MCF 10A (cell line): ENCODE measurements at regions of chr10 and their contacts with region 1.

Region 1: DNA sequence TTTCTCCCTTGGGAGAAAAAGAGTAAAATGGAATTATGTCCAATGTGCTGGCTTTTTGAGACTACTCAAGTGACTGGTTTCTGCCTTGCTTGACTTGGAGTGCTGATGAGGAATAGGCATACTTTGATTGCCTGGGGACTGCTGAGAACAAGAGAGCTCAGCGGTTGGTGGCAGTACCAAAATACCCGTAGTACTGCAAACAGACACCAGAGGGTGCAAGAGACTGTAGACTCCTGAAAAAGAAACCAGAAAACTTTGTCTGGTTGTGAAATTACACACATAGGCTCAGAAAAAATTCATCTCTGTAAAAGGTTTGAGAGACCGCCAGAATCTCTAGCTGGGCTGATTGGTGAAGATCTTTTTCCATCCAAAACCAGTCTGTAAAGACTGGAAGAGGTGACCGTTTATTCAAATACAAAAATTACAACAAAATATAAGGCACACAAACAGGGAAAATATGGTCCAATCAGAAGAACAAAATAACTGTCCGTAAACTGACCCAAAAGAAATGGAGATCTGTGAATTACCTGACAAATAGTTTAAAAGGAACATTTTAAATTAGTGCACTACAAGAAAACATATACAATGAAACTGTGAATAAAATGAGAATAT is 18.5 kb downstream of the BICC1 start:
- DNase-seq: peak; percentile 81
- H3K4me3 Mint-ChIP-seq: no peak overlapping the region
- H3K27ac Mint-ChIP-seq: peak overlapping the region; percentile 87
- H3K4me1 Mint-ChIP-seq: peaks cover 24% of the 10 kb centered on the region
- H3K27me3 Mint-ChIP-seq: no peaks in the 10 kb centered on the region
- CTCF ChIP-seq: peak; percentile 84

Region 2: GRCh38 chr10:58299580-58299979 is 231.6 kb before region 1 on chr10:
- CTCF ChIA-PET with region 1: interaction called, 17 read pairs
- POLR2A ChIA-PET with region 1: no interaction called
- intact Hi-C with region 1: no loop called
- DNase-seq: peak; percentile 80
- H3K4me3 Mint-ChIP-seq: no peak overlapping the region
- H3K27ac Mint-ChIP-seq: no peak overlapping the region
- H3K4me1 Mint-ChIP-seq: no peaks in the 10 kb centered on the region
- H3K27me3 Mint-ChIP-seq: peaks cover 40% of the 10 kb centered on the region
- CTCF ChIP-seq: peak; percentile 76

Region 3: DNA sequence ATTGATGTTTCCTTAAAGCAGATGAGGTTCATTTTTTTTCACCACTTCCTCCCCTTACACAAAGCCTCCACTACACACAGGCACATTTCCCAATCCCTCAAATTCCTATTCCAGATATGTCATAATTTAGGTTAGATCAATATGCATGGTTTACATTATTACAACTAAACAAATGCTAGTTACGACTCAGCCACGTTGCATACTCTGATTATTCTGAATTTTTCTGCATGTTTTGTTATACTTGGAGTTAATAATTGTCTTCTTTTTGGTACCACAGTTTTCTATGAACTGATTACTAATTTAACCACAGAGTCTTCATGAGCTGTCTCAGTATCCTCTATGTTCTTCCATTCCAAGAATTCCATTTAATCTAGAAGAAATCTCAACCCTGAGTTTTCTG is 22.9 kb before region 1 on chr10:
- CTCF ChIA-PET with region 1: interaction called, 10 read pairs
- POLR2A ChIA-PET with region 1: interaction called, 7 read pairs
- intact Hi-C with region 1: no loop called
- DNase-seq: peak; percentile 18
- H3K4me3 Mint-ChIP-seq: no peak overlapping the region
- H3K27ac Mint-ChIP-seq: no peak overlapping the region
- H3K4me1 Mint-ChIP-seq: peaks cover 6% of the 10 kb centered on the region
- H3K27me3 Mint-ChIP-seq: no peaks in the 10 kb centered on the region
- CTCF ChIP-seq: no peak

Region 4: GRCh38 chr10:58518775-58519174 is 12.4 kb before region 1 on chr10:
- CTCF ChIA-PET with region 1: interaction called, 19 read pairs
- POLR2A ChIA-PET with region 1: interaction called, 10 read pairs
- intact Hi-C with region 1: no loop called
- DNase-seq: no peak
- H3K4me3 Mint-ChIP-seq: no peak overlapping the region
- H3K27ac Mint-ChIP-seq: no peak overlapping the region
- H3K4me1 Mint-ChIP-seq: peaks cover 37% of the 10 kb centered on the region
- H3K27me3 Mint-ChIP-seq: no peaks in the 10 kb centered on the region
- CTCF ChIP-seq: no peak

Region 5: GRCh38 chr10:58641095-58641531 is 109.9 kb after region 1 on chr10:
- CTCF ChIA-PET with region 1: interaction called, 129 read pairs
- POLR2A ChIA-PET with region 1: interaction called, 33 read pairs
- intact Hi-C with region 1: loop called (anchors 1 kb)
- DNase-seq: peak; percentile 86
- H3K4me3 Mint-ChIP-seq: peak overlapping the region; percentile 62
- H3K27ac Mint-ChIP-seq: peak overlapping the region; percentile 91
- H3K4me1 Mint-ChIP-seq: peaks cover 63% of the 10 kb centered on the region
- H3K27me3 Mint-ChIP-seq: no peaks in the 10 kb centered on the region
- CTCF ChIP-seq: peak; percentile 25

Region 6: GRCh38 chr10:58781873-58782488 is 250.8 kb after region 1 on chr10:
- CTCF ChIA-PET with region 1: interaction called, 70 read pairs
- POLR2A ChIA-PET with region 1: no interaction called
- intact Hi-C with region 1: loop called (anchors 1 kb)
- DNase-seq: peak; percentile 59
- H3K4me3 Mint-ChIP-seq: no peak overlapping the region
- H3K27ac Mint-ChIP-seq: no peak overlapping the region
- H3K4me1 Mint-ChIP-seq: peaks cover 22% of the 10 kb centered on the region
- H3K27me3 Mint-ChIP-seq: no peaks in the 10 kb centered on the region
- CTCF ChIP-seq: peak; percentile 52

Region 7: GRCh38 chr10:59181668-59182067 is 650.5 kb after region 1 on chr10:
- CTCF ChIA-PET with region 1: interaction called, 9 read pairs
- POLR2A ChIA-PET with region 1: no interaction called
- intact Hi-C with region 1: loop called (anchors 5 kb)
- DNase-seq: peak; percentile 65
- H3K4me3 Mint-ChIP-seq: no peak overlapping the region
- H3K27ac Mint-ChIP-seq: no peak overlapping the region
- H3K4me1 Mint-ChIP-seq: no peaks in the 10 kb centered on the region
- H3K27me3 Mint-ChIP-seq: peaks cover 10% of the 10 kb centered on the region
- CTCF ChIP-seq: peak; percentile 48